ENCODE measurements at regions of chr12 and their contacts with region 1.

Region 1: DNA sequence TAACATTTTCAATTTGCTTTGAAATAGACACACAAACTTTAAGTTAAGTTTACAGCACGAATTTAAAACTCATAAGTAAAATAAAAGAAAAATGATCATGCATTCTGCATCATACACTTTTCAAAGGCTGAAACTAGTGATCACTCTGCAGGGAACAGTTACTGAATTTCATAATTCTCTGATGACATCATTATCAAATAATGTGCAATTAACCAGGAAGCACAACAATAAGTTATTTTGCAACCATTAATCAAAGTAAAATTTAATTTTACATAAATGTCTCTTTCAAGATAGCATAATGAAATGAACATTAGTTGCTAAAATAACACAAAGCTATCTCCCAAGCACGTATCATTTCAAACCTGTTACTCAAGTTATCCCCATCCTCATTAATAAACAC is 1015.5 kb upstream of the USP15 start:
- DNase-seq: no peak
- H3K4me3 Mint-ChIP-seq: no peak overlapping the region
- H3K27ac Mint-ChIP-seq: no peak overlapping the region
- H3K4me1 Mint-ChIP-seq: no peaks in the 10 kb centered on the region
- H3K27me3 Mint-ChIP-seq: no peaks in the 10 kb centered on the region

Region 2: DNA sequence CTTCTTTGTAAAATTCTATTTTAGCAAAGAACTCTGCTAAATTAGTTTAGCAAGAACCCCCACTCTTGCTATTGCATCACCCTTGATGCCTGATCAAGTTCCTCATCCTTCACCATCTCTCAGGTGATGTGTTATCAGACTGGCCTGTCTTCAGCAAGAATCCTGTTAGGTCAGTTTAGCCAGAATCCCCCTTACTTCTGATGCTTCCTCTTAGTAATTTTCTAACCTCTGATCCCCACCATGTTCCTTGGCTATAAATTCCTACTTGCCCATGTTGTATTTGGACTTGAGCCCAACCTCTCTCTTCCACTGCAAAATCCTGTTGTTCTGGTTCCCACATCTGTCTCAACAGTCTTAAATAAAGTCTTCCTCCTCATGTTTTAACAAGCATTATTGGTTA is 27.7 kb after region 1 on chr12:
- intact Hi-C with region 1: loop called (anchors 1 kb)
- DNase-seq: no peak
- H3K4me3 Mint-ChIP-seq: no peak overlapping the region
- H3K27ac Mint-ChIP-seq: no peak overlapping the region
- H3K4me1 Mint-ChIP-seq: no peaks in the 10 kb centered on the region
- H3K27me3 Mint-ChIP-seq: no peaks in the 10 kb centered on the region

Region 3: DNA sequence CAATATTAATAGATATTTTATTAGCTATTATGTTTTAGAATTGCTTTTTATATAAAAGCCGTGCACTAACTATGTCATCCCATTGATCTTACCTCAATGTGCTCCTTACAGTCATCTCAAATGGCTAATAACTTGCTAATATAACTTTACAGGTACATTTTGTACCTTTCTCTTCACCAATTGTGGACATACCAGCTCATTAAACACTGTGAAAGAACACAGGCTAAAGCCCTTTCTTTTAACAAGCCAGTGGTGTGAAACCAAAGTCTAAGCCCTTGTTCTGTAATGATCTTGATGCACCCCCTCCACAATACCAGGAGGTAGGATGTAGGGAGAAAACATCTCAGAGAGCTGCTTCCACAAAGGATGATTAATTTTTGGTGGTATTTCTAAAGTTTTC is 340.2 kb after region 1 on chr12:
- intact Hi-C with region 1: no loop called
- DNase-seq: no peak
- H3K4me3 Mint-ChIP-seq: no peak overlapping the region
- H3K27ac Mint-ChIP-seq: no peak overlapping the region
- H3K4me1 Mint-ChIP-seq: no peaks in the 10 kb centered on the region
- H3K27me3 Mint-ChIP-seq: peaks cover 1% of the 10 kb centered on the region

Measured in activated T-helper 1 cell treated with anti-CD3 and anti-CD28 coated beads, Interleukin-12 subunit alpha, Interleukin-12 subunit beta, Interleukin-2, Interleukin-4 antibody, amounts not matched to agents 30 ng/mL and 10 ng/mL and 1 ng/mL, durations not matched to agents 14 hours and 24 hours and 36 hours (primary cell).